Activated naive CD4-positive, alpha-beta T cell treated with anti-CD3 and anti-CD28 coated beads for 36 hours (primary cell): ENCODE measurements at regions of chr11 and their contacts with region 1.

Region 1: GRCh38 chr11:83019888-83020579 is 51.7 kb downstream of the RAB30 start:
- DNase-seq: no peak
- H3K4me3 Mint-ChIP-seq: no peak overlapping the region
- H3K27ac Mint-ChIP-seq: no peak overlapping the region
- H3K4me1 Mint-ChIP-seq: peaks cover 17% of the 10 kb centered on the region
- H3K27me3 Mint-ChIP-seq: no peaks in the 10 kb centered on the region

Region 2: DNA sequence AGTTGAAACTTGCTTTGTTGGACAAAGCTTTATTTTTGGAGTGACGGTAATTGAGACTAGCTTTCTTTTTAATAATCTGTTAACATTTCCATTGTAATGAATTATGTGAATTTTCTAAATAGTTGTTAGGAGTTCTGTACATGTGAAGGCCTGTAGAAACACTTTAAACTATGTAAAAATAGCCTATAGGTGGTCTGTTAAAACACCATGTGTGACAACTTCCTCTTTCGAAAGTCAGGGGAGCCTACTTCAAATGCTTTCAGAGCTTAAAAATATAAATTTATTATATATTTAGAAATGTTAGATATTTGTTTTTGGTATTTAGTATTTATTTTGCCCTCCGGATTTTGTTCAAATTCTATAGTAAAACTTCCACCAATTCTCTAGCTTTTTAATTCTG is 89.8 kb before region 1 on chr11:
- CTCF ChIA-PET with region 1: no interaction called
- intact Hi-C with region 1: no loop called
- DNase-seq: no peak
- H3K4me3 Mint-ChIP-seq: no peak overlapping the region
- H3K27ac Mint-ChIP-seq: no peak overlapping the region
- H3K4me1 Mint-ChIP-seq: peaks cover 38% of the 10 kb centered on the region
- H3K27me3 Mint-ChIP-seq: no peaks in the 10 kb centered on the region

Region 3: GRCh38 chr11:83033972-83034672 is 14.1 kb after region 1 on chr11:
- CTCF ChIA-PET with region 1: no interaction called
- intact Hi-C with region 1: loop called (anchors 2 kb)
- DNase-seq: no peak
- H3K4me3 Mint-ChIP-seq: no peak overlapping the region
- H3K27ac Mint-ChIP-seq: no peak overlapping the region
- H3K4me1 Mint-ChIP-seq: peaks cover 33% of the 10 kb centered on the region
- H3K27me3 Mint-ChIP-seq: no peaks in the 10 kb centered on the region